Activated CD4-positive, alpha-beta T cell treated with anti-CD3 and anti-CD28 coated beads, Interleukin-2, amount 10 ng/mL, durations not matched to agents 24 days and 14 days (primary cell): ENCODE measurements at regions of chr21 and their contacts with region 1.

Region 1: DNA sequence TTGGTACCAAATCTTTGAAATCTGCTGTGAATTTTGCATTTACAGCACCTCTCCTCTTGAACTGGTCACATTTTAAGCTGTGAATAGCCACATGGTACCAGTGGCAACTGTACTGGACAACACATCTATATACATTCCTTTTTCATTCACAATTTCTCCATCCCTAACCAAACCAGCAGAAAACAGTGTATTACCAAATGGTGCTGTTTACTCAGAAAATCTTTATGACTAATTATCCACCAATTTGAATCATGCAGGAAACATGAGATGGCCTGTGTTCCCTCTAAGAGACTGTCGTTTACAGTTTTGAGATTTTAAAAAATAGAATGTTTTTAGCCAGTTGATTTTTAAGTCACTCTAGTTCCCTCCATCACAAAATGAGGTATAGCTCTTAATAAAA is 17.6 kb upstream of the CCT8 start:
- DNase-seq: no peak
- H3K4me3 Mint-ChIP-seq: no peak overlapping the region
- H3K27ac Mint-ChIP-seq: no peak overlapping the region
- H3K4me1 Mint-ChIP-seq: peaks cover 17% of the 10 kb centered on the region
- H3K27me3 Mint-ChIP-seq: no peaks in the 10 kb centered on the region

Region 2: DNA sequence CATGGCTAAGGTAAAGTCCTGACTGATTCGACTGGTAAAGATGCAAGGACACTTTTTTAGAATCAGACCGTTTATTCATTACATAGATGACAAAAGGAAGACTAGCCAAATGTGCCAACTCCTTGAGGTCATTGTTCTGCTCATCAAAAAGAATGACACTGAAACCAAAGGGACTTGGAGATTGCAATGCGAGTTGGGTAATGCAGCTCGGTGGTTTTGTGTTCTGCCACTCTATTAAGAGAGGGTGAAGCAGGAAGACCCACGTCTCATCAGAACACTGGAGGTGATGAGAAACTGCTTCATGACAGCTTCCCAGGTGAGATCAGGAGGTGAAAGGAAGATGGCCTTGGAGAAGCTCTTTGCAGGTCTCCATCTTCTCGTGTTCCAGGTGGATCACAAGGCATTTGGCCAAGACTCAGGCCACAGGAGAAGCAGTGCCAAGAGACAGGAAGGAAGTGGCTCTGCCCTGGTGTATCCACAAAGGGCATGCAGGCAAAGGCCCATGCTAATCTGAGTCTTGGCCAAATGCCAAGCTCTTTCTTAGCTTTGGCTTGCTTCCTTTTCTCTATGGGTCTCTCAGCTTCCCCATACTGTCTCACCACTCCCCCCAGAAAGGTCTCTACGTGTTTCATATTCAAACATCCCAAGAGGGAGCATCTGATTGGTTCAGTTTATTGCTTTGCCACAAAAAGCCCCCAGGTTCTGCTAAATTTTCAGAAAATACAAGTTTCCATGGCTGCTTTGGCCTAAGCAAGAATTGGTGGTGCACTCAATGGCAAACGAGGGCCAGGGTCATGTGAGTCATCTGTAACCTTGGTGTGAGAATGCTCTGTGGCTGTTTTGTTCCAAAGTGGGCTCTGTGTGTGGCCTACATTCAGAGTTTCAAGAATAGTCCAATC is 11.9 kb before region 1 on chr21:
- intact Hi-C with region 1: loop called (anchors 2 kb)
- DNase-seq: peak; percentile 67
- H3K4me3 Mint-ChIP-seq: peak overlapping the region; percentile 88
- H3K27ac Mint-ChIP-seq: peak overlapping the region; percentile 77
- H3K4me1 Mint-ChIP-seq: peaks cover 34% of the 10 kb centered on the region
- H3K27me3 Mint-ChIP-seq: no peaks in the 10 kb centered on the region

Region 3: DNA sequence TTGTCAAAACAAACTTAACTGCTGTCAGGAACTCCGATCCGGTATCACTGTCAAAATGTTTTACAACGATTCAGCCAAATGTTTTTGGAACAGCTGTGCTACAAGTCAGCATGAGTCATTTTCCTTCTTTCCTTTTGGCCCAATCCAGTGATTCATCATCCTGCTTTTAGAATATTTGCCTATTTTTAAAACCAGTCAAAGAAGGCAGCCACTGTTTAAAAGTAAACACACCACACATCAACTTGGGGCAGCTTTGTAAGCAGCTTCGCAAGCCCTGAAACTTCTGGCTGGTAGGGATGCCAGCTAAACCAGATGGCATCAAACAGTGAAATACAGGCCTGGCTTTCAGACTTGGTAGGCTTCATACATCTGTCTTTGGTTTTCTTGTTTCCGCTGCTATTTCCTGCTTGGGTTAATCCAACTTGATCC is 54.3 kb after region 1 on chr21:
- intact Hi-C with region 1: loop called (anchors 5 kb)
- DNase-seq: no peak
- H3K4me3 Mint-ChIP-seq: no peak overlapping the region
- H3K27ac Mint-ChIP-seq: peak overlapping the region; percentile 73
- H3K4me1 Mint-ChIP-seq: peaks cover 16% of the 10 kb centered on the region
- H3K27me3 Mint-ChIP-seq: no peaks in the 10 kb centered on the region

Region 4: DNA sequence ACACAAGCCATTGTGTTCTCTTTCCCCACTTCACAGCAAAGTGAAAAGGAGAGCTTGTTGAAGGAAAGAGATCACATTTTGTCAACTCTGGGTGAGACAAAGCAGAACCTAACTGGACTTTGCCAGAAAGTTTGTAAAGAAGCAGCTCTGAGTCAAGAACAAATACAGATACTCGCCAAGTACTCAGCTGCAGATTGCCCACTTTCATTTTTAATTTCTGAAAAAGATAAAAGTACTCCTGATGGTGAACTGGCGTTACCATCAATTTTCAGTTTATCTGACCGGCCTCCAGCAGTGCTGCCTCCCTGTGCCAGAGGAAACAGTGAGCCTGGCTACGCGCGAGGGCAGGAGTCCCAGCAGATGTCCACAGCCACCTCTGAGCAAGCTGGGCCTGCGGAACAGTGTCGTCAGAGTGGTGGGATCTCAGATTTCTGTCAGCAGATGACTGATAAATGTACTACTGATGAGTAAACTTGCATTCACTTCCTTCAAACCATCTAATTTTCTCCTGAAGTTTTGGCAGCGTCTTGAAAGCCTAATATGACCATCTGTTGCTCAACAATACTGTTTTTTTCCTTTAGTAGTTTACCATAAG is 251.4 kb after region 1 on chr21:
- intact Hi-C with region 1: loop called (anchors 10 kb)
- DNase-seq: no peak
- H3K4me3 Mint-ChIP-seq: no peak overlapping the region
- H3K27ac Mint-ChIP-seq: peak overlapping the region; percentile 78
- H3K4me1 Mint-ChIP-seq: peaks cover 27% of the 10 kb centered on the region
- H3K27me3 Mint-ChIP-seq: no peaks in the 10 kb centered on the region

Region 5: DNA sequence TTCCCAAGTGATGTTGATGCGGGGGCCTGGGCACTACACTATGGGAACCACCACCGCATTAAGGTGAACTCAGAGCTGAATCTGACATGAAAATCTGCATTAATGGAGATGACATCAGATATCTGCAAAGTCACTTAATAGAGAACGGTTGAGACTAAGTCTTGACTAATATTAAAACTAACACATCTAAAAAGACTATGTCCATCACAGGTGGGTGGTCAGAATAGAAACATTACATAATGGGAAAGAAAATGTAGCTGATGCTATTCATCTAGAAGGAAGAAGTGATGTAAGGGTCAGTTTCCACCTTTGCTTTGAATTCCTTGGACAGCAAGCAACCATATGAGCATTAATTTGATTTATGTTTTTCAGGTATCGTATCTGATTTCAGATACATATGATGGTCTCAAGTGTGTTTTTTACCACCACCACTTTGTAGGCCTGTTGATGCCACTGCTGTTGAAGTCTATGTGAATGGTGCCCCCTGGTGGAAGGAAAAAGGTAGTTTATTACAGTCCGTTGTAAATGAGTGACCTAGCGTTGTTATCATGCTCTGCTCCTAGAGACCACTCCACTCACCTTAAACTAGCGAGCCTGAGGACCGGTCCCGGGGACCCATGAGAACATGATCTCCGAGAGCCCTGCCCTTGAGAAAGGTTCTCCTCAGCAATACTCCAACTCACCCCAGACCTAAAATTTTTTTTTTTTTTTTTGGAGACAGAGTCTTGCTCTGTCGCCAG is 281.2 kb after region 1 on chr21:
- intact Hi-C with region 1: loop called (anchors 1 kb)
- DNase-seq: peak; percentile 89
- H3K4me3 Mint-ChIP-seq: no peak overlapping the region
- H3K27ac Mint-ChIP-seq: peak overlapping the region; percentile 57
- H3K4me1 Mint-ChIP-seq: peaks cover 18% of the 10 kb centered on the region
- H3K27me3 Mint-ChIP-seq: no peaks in the 10 kb centered on the region

Region 6: GRCh38 chr21:29849735-29850176 is 758.7 kb after region 1 on chr21:
- intact Hi-C with region 1: loop called (anchors 2 kb)
- DNase-seq: peak; percentile 84
- H3K4me3 Mint-ChIP-seq: no peak overlapping the region
- H3K27ac Mint-ChIP-seq: no peak overlapping the region
- H3K4me1 Mint-ChIP-seq: no peaks in the 10 kb centered on the region
- H3K27me3 Mint-ChIP-seq: no peaks in the 10 kb centered on the region